ENCODE measurements at regions of chr5 and their contacts with region 1.

Region 1: GRCh38 chr5:42950440-42951292 is 89.5 kb downstream of the ANXA2R start:
- H3K4me3 Mint-ChIP-seq: peak overlapping the region; percentile 83
- H3K27ac Mint-ChIP-seq: peak overlapping the region; percentile 98
- H3K4me1 Mint-ChIP-seq: peaks cover 35% of the 10 kb centered on the region
- H3K27me3 Mint-ChIP-seq: peaks cover 10% of the 10 kb centered on the region

Region 2: GRCh38 chr5:41903892-41904799 is 1046.5 kb before region 1 on chr5 and contains the start of gene RIMOC1:
- intact Hi-C with region 1: loop called (anchors 2 kb)
- H3K4me3 Mint-ChIP-seq: peak within 1 kb of the TSS; percentile 95
- H3K27ac Mint-ChIP-seq: peak within 1 kb of the TSS; percentile 99
- H3K4me1 Mint-ChIP-seq: peaks cover 45% of the 10 kb centered on the region
- H3K27me3 Mint-ChIP-seq: peaks cover 9% of the 10 kb centered on the region

Region 3: DNA sequence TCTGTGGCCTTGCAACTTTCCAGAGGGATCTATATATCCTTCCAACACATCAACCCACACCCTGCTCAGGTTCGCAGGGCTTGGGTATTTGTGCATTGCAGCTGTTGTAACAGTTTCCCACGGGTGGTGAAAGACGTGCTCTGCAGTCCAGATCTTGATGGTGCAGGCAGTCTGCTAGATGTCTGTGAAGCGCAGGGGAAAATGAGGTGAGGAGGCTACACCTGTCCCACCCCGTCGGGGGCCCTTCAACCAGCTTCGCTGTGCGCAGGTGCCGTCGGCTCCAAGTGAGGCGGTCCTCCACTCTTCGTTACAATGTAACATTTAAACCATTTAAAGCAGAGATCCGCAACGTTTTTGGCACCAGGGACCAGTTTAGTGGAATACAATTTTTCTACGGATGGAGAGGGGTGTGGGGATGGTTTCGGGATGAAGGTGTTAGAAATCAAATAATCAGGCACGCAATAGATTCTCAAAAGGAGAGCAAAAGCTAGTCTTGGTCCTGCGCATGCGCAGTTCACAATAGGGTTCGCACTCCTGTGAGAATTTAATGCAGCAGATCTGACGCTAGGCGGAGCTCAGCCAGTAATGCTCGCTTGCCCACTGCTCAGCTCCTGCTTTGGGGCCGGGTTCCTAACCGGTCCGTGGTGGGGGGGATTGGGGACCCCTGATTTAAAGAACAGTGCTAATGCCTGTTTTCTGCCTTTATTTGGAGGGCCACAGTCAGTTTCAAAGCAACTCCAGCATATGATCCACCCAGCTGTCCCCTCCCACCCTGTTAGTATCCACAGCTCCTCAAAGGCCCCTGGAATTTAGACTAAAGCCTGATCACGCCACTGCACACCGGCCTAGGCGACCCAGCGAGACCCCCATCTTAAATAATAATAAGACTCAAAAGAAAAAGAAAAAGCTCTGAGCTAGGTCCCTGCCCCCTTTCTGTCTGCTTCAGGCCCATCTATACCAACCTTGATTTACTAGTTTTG is 41.9 kb before region 1 on chr5:
- intact Hi-C with region 1: loop called (anchors 5 kb)
- H3K4me3 Mint-ChIP-seq: peak overlapping the region; percentile 77
- H3K27ac Mint-ChIP-seq: peak overlapping the region; percentile 62
- H3K4me1 Mint-ChIP-seq: peaks cover 9% of the 10 kb centered on the region
- H3K27me3 Mint-ChIP-seq: peaks cover 3% of the 10 kb centered on the region

Region 4: GRCh38 chr5:43008369-43009153 is 57.9 kb after region 1 on chr5:
- intact Hi-C with region 1: loop called (anchors 5 kb)
- H3K4me3 Mint-ChIP-seq: peak overlapping the region; percentile 82
- H3K27ac Mint-ChIP-seq: peak overlapping the region; percentile 98
- H3K4me1 Mint-ChIP-seq: peaks cover 39% of the 10 kb centered on the region
- H3K27me3 Mint-ChIP-seq: no peaks in the 10 kb centered on the region

Region 5: GRCh38 chr5:43040287-43041098 is 89.8 kb after region 1 on chr5 and contains the start of gene ANXA2R:
- intact Hi-C with region 1: loop called (anchors 1 kb)
- H3K4me3 Mint-ChIP-seq: peak within 1 kb of the TSS; percentile 88
- H3K27ac Mint-ChIP-seq: peak within 1 kb of the TSS; percentile 100
- H3K4me1 Mint-ChIP-seq: peaks cover 43% of the 10 kb centered on the region
- H3K27me3 Mint-ChIP-seq: no peaks in the 10 kb centered on the region

Region 6: GRCh38 chr5:43207601-43208000 is 256.9 kb after region 1 on chr5:
- intact Hi-C with region 1: no loop called
- H3K4me3 Mint-ChIP-seq: no peak overlapping the region
- H3K27ac Mint-ChIP-seq: no peak overlapping the region
- H3K4me1 Mint-ChIP-seq: peaks cover 5% of the 10 kb centered on the region
- H3K27me3 Mint-ChIP-seq: peaks cover 21% of the 10 kb centered on the region

Measured in dendritic cell treated with granulocyte-macrophage colony-stimulating factor and Interleukin-4, amounts not matched to agents 40 ng/mL and 50 ng/mL, for 4 days (primary cell).